ENCODE measurements at regions of chr19 and their contacts with region 1.

Region 1: DNA sequence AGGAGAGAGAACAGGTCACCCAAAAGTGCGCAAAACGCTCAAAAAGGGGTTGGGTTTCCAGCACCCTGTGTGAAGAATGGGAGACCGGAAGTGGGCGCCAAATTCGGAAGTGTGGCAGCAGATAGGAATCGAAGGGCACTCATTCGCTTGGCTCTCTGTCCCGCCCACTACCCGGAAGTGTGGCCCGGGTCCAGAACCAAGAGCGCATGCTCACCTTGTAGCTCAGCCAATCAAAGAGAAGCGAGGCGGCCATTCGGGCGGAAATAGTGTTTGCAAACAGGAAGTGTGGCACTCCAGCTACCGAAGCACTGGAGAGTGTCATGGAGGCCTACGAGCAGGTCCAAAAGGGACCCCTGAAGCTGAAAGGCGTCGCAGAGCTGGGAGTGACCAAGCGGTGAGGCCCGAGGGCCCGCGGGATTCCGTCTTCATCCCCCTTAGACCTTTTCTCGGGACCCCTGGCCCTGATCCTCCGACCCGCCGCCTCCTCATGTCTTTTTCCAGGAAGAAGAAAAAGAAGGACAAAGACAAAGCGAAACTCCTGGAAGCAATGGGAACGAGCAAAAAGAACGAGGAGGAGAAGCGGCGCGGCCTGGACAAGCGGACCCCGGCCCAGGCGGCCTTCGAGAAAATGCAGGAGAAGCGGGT is at the start of gene FAM32A:
- DNase-seq: peak; percentile 99
- H3K4me3 Mint-ChIP-seq: peak within 1 kb of the TSS; percentile 94
- H3K27ac Mint-ChIP-seq: peak within 1 kb of the TSS; percentile 94
- H3K4me1 Mint-ChIP-seq: peaks cover 36% of the 10 kb centered on the region
- H3K27me3 Mint-ChIP-seq: no peaks in the 10 kb centered on the region
- total RNA-seq, gene FAM32A: 71.6 and 72.8 TPM in 2 replicates

Region 2: DNA sequence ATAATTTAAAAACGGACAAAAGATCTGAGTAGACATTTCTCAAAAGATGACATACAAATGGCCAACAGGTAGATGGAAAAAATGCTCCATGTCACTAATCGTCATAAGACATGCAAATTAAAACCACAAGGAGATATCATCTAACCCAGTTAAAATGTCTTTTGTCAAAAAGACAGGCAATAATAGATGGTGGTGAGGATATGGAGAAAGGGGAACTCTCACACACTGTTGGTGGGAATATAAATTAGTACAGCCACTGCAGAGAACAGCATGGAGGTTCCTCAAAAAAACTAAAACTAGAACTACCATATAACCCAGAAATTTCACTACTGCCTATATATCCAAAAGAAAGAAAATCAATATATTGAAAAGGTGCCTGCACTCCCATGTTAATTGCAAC is 198.5 kb before region 1 on chr19:
- intact Hi-C with region 1: no loop called
- DNase-seq: no peak
- H3K4me3 Mint-ChIP-seq: no peak overlapping the region
- H3K27ac Mint-ChIP-seq: no peak overlapping the region
- H3K4me1 Mint-ChIP-seq: no peaks in the 10 kb centered on the region
- H3K27me3 Mint-ChIP-seq: peaks cover 13% of the 10 kb centered on the region

Region 3: DNA sequence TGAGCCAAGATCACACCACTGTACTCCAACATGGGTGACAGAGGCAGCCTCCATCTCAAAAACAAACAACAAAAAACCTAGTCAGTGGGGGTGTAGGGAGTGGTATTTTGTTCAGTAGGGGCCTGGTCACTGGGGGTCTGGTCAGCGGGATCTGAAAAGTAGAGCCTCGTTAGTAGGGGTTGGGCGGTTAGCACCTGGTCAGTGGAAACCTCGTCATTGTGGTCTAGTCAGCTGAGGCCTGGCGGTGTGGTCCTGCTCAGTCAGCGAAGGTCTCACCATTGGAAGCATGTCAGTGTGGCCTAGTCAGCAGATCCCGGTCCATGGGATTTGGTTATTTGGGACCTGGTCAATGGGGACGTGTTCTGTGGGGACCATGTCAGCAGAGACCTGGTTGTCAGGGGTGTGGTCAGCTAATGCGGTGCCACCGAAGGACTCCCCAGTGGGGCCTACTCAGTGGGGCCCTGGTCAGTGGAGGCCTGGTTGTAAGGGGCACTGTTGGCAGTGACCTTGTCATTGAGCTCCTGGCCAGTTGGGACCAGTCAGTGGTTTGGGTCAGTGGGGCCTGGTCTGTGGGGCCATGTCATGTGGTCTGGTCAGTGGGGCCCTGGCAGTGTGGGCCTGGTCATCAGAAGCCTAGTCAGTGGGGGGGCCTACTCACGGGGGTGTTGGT is 171.9 kb before region 1 on chr19:
- intact Hi-C with region 1: no loop called
- DNase-seq: no peak
- H3K4me3 Mint-ChIP-seq: no peak overlapping the region
- H3K27ac Mint-ChIP-seq: no peak overlapping the region
- H3K4me1 Mint-ChIP-seq: no peaks in the 10 kb centered on the region
- H3K27me3 Mint-ChIP-seq: peaks cover 3% of the 10 kb centered on the region

Region 4: DNA sequence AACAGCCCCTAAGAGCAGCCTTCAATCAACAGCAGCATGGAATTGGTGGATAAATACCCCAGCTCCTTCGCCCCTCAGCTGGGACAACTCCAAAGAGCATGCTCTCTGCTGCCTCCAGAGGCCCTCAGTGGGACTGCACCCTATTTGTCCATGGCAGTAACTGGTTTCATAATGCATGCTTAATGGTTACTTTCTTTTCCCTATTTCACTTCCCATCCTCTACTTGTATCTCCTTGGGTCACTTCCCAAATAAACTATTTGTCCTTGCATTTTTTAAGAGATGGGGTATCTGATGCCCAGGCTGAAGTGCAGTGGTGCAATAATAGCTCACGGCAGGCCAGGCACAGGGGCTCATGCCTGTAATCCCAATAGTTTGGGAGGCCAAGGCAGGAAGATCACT is 122.5 kb before region 1 on chr19:
- intact Hi-C with region 1: loop called (anchors 1 kb)
- DNase-seq: peak; percentile 55
- H3K4me3 Mint-ChIP-seq: no peak overlapping the region
- H3K27ac Mint-ChIP-seq: no peak overlapping the region
- H3K4me1 Mint-ChIP-seq: peaks cover 24% of the 10 kb centered on the region
- H3K27me3 Mint-ChIP-seq: peaks cover 4% of the 10 kb centered on the region

Region 5: DNA sequence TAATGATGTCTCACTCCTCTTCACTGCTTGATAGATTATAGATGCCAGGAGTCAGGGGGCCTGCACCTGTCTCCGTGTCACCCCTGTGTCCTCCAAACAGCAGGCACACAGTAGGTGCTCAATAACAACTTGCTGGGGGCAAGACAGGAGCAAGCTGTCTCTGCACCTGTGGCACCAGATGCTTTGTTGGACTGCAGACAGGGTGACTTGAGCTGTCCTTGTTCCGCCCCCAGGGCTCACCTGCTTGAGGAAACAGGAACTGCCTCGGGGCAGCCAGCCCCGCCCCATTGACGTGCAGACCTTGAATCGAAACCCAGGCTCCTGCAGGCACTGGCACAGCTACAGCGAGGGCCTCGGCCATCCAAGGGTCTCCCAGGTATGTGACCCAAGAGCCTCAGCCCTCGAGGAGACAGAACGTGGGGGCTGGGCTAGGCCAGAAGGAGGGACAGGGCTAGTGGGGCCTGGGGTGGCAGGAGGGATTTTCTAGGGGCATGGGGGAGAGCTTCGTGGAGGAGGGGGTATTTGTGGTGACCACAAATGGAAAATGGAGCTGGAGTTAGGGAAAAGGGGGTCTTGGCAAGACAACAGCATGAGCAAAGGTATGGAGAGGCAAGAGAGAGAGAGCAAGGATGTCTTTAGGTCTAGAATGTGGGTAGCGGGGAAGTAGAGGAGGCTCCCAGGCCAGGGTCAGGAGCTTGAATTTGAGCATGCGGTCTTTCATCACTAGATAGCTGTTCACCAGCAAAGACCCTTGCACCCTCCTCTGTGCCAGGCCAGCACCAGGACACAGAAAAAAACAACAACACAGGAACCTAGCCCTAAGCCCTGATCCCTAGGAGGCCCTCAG is 41.6 kb before region 1 on chr19 and contains the start of gene HSH2D:
- intact Hi-C with region 1: loop called (anchors 2 kb)
- DNase-seq: peak; percentile 78
- H3K4me3 Mint-ChIP-seq: peak within 1 kb of the TSS; percentile 98
- H3K27ac Mint-ChIP-seq: peak within 1 kb of the TSS; percentile 97
- H3K4me1 Mint-ChIP-seq: peaks cover 52% of the 10 kb centered on the region
- H3K27me3 Mint-ChIP-seq: no peaks in the 10 kb centered on the region
- total RNA-seq, gene HSH2D: 32.0 and 35.2 TPM in 2 replicates

Region 6: DNA sequence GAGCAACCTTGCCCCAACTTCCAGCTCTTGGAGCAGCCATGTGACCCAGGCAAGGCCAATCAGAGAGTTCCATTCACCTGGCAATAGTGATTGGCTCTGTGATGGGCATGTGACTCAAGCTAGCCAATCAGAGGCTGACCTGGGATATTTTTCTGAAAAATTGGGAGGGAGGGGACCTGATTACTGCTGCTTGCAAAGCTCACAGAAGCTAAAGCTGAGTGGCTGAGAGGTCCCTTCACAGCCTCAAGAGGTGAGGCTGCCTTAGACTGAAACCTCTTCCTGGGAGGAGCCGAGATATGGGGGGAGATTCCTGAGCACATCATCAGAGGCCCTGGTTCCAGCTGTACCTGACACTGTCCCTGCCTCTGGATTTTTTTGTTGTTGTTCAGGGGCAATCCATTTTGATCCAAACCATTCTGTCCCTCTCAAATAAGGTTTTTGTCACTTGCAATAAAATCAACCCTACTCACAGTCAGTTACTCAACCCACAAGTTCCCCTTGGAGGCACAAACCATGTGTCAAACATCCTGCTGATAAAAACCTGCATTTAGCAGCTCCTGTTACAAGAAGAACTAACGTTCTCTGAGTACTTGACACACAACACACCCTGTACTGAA is 16.7 kb before region 1 on chr19:
- intact Hi-C with region 1: loop called (anchors 2 kb)
- DNase-seq: no peak
- H3K4me3 Mint-ChIP-seq: no peak overlapping the region
- H3K27ac Mint-ChIP-seq: peak overlapping the region; percentile 47
- H3K4me1 Mint-ChIP-seq: peaks cover 20% of the 10 kb centered on the region
- H3K27me3 Mint-ChIP-seq: peaks cover 2% of the 10 kb centered on the region

Region 7: GRCh38 chr19:16233836-16234551 is 48.7 kb after region 1 on chr19:
- intact Hi-C with region 1: no loop called
- DNase-seq: no peak
- H3K4me3 Mint-ChIP-seq: no peak overlapping the region
- H3K27ac Mint-ChIP-seq: no peak overlapping the region
- H3K4me1 Mint-ChIP-seq: peaks cover 17% of the 10 kb centered on the region
- H3K27me3 Mint-ChIP-seq: no peaks in the 10 kb centered on the region